Naive thymus-derived CD4-positive, alpha-beta T cell (primary cell): ENCODE measurements at regions of chr3 and their contacts with region 1.

Region 1: GRCh38 chr3:196739671-196740480 is at the start of gene PAK2:
- DNase-seq: peak; percentile 80 to 92 (median 85)
- ATAC-seq: peak; percentile 95
- H3K4me3 ChIP-seq: peak within 1 kb of the TSS; percentile 78
- H3K4me3 Mint-ChIP-seq: peak within 1 kb of the TSS; percentile 90 to 100 (median 100)
- H3K27ac ChIP-seq: peak within 1 kb of the TSS; percentile 94
- H3K27ac Mint-ChIP-seq: peak within 1 kb of the TSS; percentile 93 to 100 (median 99)
- H3K4me1 ChIP-seq: peaks cover 15 to 25% of the 10 kb centered on the region in 2 donors
- H3K4me1 Mint-ChIP-seq: peaks cover 25 to 38% (median 29%) of the 10 kb centered on the region in 7 donors
- H3K27me3 ChIP-seq: no peaks in the 10 kb centered on the region
- H3K27me3 Mint-ChIP-seq: no peaks in the 10 kb centered on the region
- total RNA-seq, gene PAK2: 57.7 to 97.3 (median 79.7) TPM

Region 2: DNA sequence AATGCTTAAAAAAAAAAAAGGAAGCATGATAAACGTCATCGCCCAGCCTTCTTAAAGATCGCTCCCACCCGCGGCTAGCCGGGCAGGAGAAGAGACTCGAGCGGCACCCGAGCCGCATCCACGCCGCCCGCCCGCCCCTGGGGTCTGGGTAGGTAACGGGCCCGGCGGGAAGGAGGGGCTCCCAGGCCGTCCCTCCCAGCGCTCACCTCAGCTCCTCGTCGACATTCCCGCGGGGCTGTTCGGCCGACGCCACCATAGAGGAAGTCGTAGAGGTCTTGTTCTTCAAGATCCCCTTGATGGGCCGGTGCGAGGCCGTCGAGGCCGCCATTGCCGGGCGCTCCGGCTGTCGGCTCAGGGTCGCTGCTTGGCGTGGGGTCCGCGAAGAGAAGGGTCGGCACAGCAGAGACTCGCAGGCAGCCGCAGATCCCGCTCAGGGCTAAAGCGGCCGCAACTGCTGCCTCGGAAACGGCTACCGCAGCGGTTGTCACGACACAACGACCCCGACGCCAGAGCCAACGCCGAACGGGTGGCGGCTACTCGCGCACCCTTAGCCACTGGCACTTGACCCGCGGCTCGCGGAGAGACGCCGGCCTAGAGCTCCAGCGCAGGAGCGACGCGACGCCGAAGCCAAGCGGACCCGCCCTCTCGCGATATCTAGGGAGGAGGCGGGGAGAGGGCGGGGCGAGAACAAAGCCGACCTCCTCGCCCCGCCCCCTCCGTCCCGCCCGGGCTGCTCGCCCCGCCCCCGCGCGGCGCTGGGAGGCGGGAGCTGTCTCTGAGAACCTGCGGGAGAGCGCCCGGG is 1197.0 kb before region 1 on chr3 and contains the start of gene PPP1R2:
- CTCF ChIA-PET with region 1: no interaction called
- POLR2A ChIA-PET with region 1: no interaction called
- intact Hi-C with region 1: loop called in 1 of 2 experiments (anchors 10 kb)
- DNase-seq: peak; percentile 86 to 97 (median 93)
- ATAC-seq: peak; percentile 94
- H3K4me3 ChIP-seq: peak within 1 kb of the TSS; percentile 63
- H3K4me3 Mint-ChIP-seq: peak within 1 kb of the TSS; percentile 89 to 98 (median 93)
- H3K27ac ChIP-seq: peak within 1 kb of the TSS; percentile 98
- H3K27ac Mint-ChIP-seq: peak within 1 kb of the TSS; percentile 92 to 99 (median 97)
- H3K4me1 ChIP-seq: peaks cover 37 to 66% of the 10 kb centered on the region in 2 donors
- H3K4me1 Mint-ChIP-seq: peaks cover 48 to 77% (median 73%) of the 10 kb centered on the region in 7 donors
- H3K27me3 ChIP-seq: no peaks in the 10 kb centered on the region
- H3K27me3 Mint-ChIP-seq: no peaks in the 10 kb centered on the region
- total RNA-seq, gene PPP1R2: 76.1 to 160 (median 150) TPM

Region 3: DNA sequence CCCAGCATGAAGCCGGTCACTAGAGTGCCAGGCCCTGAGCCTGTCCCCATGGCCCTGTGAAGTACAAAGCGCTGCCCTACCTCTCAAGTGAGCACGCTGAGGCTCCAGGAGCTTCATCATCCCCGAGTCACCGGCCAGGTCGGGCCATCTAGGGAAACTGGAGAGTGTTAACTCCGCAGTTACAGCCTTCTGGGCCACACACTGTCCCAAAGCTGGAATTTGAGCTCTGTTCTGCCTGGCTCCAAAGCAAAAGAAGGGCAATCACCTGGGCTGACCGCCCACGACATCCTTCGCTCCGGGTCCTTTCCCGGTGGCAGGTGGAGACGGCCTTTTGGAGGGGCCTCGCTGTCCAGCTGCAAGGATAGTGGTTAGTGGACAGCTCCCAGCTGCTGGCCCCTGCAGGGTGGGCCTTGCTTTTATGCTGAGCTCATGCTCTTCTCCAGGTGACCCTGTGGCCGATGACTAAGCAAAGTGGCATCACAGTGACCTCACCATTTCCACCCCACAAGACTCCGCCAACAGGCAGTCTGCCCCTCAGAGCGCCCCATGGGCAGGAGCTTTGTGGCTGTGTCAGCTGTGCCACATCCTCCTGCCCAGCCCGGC is 924.6 kb before region 1 on chr3:
- CTCF ChIA-PET with region 1: no interaction called
- POLR2A ChIA-PET with region 1: no interaction called
- intact Hi-C with region 1: no loop called
- DNase-seq: no peak
- ATAC-seq: no peak
- H3K4me3 ChIP-seq: no peak overlapping the region
- H3K4me3 Mint-ChIP-seq: no peak overlapping the region
- H3K27ac ChIP-seq: no peak overlapping the region
- H3K27ac Mint-ChIP-seq: no peak overlapping the region
- H3K4me1 ChIP-seq: no peaks in the 10 kb centered on the region
- H3K4me1 Mint-ChIP-seq: peaks cover 0 to 15% (median 4%) of the 10 kb centered on the region in 7 donors
- H3K27me3 ChIP-seq: no peaks in the 10 kb centered on the region
- H3K27me3 Mint-ChIP-seq: peaks cover 0 to 3% (median 0%) of the 10 kb centered on the region in 5 donors

Region 4: DNA sequence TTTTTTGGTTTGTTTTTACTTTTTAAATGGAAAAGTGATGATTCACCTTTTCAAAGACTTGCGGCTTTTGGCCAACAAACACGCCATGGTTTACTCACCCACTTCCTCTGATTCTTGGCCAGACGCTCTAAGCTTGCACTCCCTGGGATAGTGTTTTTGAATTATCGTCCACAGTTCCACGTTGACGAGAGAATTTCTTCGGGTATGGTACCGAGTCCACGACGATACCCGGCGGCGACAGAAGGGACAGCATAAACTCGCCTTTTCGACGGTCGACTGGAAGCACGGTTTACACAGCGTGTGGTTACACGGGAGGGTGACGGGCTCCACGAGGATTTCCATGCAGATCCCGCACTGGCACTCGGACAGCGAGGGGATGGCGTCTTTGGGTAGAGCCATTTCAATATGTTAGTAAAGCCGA is 237.1 kb before region 1 on chr3:
- CTCF ChIA-PET with region 1: interaction called, 3 read pairs
- POLR2A ChIA-PET with region 1: interaction called, 3 read pairs
- intact Hi-C with region 1: loop called in 1 of 2 experiments (anchors 2 kb)
- DNase-seq: peak; percentile 17 to 74 (median 49)
- ATAC-seq: peak; percentile 56
- H3K4me3 ChIP-seq: peak overlapping the region; percentile 94
- H3K4me3 Mint-ChIP-seq: peak overlapping the region; percentile 92 to 100 (median 98)
- H3K27ac ChIP-seq: peak overlapping the region; percentile 79
- H3K27ac Mint-ChIP-seq: peak overlapping the region; percentile 86 to 96 (median 95)
- H3K4me1 ChIP-seq: peaks cover 12 to 20% of the 10 kb centered on the region in 2 donors
- H3K4me1 Mint-ChIP-seq: peaks cover 27 to 47% (median 40%) of the 10 kb centered on the region in 7 donors
- H3K27me3 ChIP-seq: no peaks in the 10 kb centered on the region
- H3K27me3 Mint-ChIP-seq: peaks cover 0 to 10% (median 0%) of the 10 kb centered on the region in 5 donors

Region 5: DNA sequence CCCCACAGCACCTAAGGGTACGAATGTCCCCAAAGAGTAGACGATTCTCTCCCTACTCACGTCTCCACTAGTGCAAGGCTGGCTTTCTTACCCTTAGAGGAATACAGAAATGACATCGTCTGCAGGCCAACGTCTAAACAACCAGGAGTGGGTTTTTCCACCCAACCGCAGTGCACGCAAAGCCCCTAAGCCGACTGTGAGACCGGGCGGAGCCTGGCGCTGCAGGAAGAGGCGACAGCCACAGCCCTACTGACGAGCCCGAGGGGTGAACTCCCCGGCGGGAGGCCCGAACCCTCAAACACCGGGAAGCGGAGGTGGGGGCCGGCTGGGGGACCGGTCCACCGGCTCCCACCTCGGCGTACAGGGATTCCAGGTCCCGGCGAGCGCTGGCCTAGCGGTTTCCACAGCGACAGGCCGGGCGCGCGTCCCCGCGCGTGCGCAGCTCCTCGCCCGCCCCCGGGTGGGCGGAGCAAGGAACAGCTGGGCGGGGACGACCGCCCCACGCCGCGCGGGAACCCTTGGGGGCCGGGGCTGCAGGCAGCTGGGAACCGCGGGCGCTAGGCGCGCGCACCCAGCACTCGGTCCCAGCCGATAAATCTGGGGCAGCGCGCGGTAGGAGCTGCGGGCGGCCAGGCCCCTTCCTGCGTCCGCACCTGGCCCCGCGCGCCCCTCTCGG is 27.9 kb before region 1 on chr3 and contains the starts of genes CEP19 and PIGX:
- CTCF ChIA-PET with region 1: no interaction called
- POLR2A ChIA-PET with region 1: interaction called, 33 read pairs
- intact Hi-C with region 1: loop called (anchors 1 kb)
- DNase-seq: peak; percentile 92 to 97 (median 94)
- ATAC-seq: peak; percentile 92
- H3K4me3 ChIP-seq: peak within 1 kb of the TSS; percentile 79
- H3K4me3 Mint-ChIP-seq: peak within 1 kb of the TSS; percentile 84 to 98 (median 94)
- H3K27ac ChIP-seq: peak within 1 kb of the TSS; percentile 96
- H3K27ac Mint-ChIP-seq: peak within 1 kb of the TSS; percentile 91 to 99 (median 96)
- H3K4me1 ChIP-seq: peaks cover 12 to 14% of the 10 kb centered on the region in 2 donors
- H3K4me1 Mint-ChIP-seq: peaks cover 16 to 42% (median 34%) of the 10 kb centered on the region in 7 donors
- H3K27me3 ChIP-seq: no peaks in the 10 kb centered on the region
- H3K27me3 Mint-ChIP-seq: no peaks in the 10 kb centered on the region
- total RNA-seq, gene CEP19: 0.96 to 8.1 (median 6.9) TPM
- total RNA-seq, gene PIGX: 13.7 to 58.5 (median 17.3) TPM

Region 6: DNA sequence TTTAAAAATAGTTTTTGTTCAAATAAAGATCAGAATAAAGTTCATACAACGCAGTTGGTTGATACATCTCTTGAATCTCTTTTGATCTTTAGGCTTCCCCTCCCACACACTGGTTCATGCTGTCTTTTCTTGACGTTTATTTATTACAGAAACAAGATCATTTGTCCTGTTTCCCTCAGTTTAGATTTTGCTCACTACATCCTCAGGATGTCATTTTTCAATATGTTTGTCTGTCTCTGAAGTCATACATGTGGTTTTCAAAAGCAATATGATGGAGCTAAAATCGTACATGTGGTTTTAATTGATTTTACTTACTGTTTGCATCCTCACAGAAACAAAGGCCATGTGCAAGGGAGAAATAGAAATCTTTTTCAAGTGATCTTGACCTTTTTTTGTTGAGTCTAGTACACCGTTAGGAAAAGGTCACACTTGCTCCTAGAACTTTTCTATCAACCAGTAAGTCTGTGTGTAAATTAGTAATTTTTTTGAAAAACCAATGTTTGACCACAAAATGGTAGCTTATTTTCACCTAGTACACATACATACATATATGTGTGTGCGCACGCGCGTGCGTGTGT is 64.1 kb after region 1 on chr3:
- CTCF ChIA-PET with region 1: no interaction called
- POLR2A ChIA-PET with region 1: interaction called, 3 read pairs
- intact Hi-C with region 1: loop called (anchors 5 kb)
- DNase-seq: peak in 7 of 9 donors; percentile 7 to 63 (median 44)
- ATAC-seq: peak; percentile 67
- H3K4me3 ChIP-seq: no peak overlapping the region
- H3K4me3 Mint-ChIP-seq: peak overlapping the region in 1 of 10 donors; percentile 43
- H3K27ac ChIP-seq: peak overlapping the region; percentile 39
- H3K27ac Mint-ChIP-seq: peak overlapping the region in 8 of 9 donors; percentile 25 to 87 (median 65)
- H3K4me1 ChIP-seq: peaks cover 0 to 3% of the 10 kb centered on the region in 2 donors
- H3K4me1 Mint-ChIP-seq: peaks cover 1 to 29% (median 24%) of the 10 kb centered on the region in 7 donors
- H3K27me3 ChIP-seq: no peaks in the 10 kb centered on the region
- H3K27me3 Mint-ChIP-seq: no peaks in the 10 kb centered on the region

Region 7: DNA sequence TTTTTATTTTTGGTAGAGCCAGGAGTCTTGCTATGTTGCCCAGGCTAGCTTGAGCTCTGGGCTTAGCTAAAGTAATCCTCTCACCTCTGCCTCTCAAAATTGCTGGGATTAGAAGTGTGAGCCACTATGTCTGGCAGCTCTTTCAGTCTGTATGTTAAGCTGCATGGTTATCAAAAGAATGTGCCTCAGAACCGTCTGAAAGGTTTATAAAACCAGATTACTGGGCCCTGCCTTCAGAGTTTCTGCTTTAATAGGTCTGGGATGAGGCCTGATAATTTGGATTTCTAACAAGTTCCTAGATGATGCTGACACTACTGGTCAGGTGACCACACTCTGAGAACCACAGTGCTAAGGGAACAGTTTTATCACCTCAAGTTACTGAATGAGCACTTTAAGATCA is 162.4 kb after region 1 on chr3:
- CTCF ChIA-PET with region 1: no interaction called
- POLR2A ChIA-PET with region 1: no interaction called
- intact Hi-C with region 1: no loop called
- DNase-seq: no peak
- ATAC-seq: no peak
- H3K4me3 ChIP-seq: no peak overlapping the region
- H3K4me3 Mint-ChIP-seq: no peak overlapping the region
- H3K27ac ChIP-seq: no peak overlapping the region
- H3K27ac Mint-ChIP-seq: no peak overlapping the region
- H3K4me1 ChIP-seq: no peaks in the 10 kb centered on the region
- H3K4me1 Mint-ChIP-seq: peaks cover 0 to 12% (median 2%) of the 10 kb centered on the region in 7 donors
- H3K27me3 ChIP-seq: no peaks in the 10 kb centered on the region
- H3K27me3 Mint-ChIP-seq: no peaks in the 10 kb centered on the region

Region 8: DNA sequence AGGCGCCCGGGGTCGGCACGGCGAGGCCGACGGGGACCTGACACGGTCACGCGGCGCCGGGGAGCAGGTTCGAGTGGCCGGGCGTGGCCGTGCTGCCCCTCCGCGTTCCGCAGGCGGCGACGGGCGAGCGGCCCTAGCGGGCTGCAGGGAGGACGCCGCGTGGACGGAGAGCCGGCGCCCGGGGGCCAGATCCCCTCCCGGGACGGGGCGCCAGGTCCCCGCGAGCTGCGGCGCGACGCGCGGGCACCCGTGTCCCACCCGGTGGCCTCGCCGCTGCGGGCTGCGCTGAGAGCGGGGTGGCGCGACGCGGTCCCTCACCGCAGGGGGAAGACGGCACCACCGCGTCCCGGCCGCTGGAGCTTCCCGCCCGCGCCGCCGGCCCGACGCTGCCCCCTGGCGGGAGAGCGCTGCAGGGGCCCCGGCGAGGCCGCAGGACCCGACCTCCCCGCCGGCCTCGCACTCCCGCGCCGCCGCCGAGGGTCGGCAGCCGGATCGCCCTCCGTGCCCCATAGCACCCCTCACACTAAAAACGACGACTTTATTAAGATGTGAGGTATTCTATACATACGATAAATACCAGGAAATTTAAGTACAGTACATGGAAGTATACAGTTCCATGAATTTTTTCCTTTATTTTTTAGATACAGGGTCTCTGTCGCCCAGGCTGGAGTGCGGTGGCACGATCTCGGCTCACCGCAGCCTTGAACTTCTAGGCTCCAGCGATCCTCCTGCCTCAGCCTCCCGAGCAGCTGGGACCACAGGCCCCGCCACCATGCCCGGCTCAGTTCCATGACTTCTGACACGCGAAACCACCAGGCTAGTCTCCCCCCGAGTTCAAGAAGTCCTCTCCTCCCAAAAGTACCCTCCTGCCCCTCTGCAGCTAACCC is 230.0 kb after region 1 on chr3:
- CTCF ChIA-PET with region 1: no interaction called
- POLR2A ChIA-PET with region 1: no interaction called
- intact Hi-C with region 1: loop called in 1 of 2 experiments (anchors 1 kb)
- DNase-seq: peak; percentile 43 to 89 (median 66)
- ATAC-seq: peak; percentile 88
- H3K4me3 ChIP-seq: peak overlapping the region; percentile 48
- H3K4me3 Mint-ChIP-seq: peak overlapping the region; percentile 63 to 88 (median 82)
- H3K27ac ChIP-seq: no peak overlapping the region
- H3K27ac Mint-ChIP-seq: peak overlapping the region in 3 of 9 donors; percentile 32 to 53 (median 44)
- H3K4me1 ChIP-seq: no peaks in the 10 kb centered on the region
- H3K4me1 Mint-ChIP-seq: peaks cover 0 to 14% (median 6%) of the 10 kb centered on the region in 7 donors
- H3K27me3 ChIP-seq: no peaks in the 10 kb centered on the region
- H3K27me3 Mint-ChIP-seq: peaks cover 0 to 12% (median 4%) of the 10 kb centered on the region in 5 donors